Aorta (tissue), 5 donors: ENCODE measurements at regions of chr3 and their contacts with region 1.

Region 1: GRCh38 chr3:194129581-194130133 is 6.3 kb upstream of the HES1 start:
- DNase-seq: peak in 1 of 2 donors; percentile 79
- ATAC-seq: no peak
- H3K4me3 ChIP-seq: no peak overlapping the region
- H3K27ac ChIP-seq: no peak overlapping the region
- H3K4me1 ChIP-seq: peaks cover 0 to 5% of the 10 kb centered on the region in 2 donors
- H3K27me3 ChIP-seq: no peaks in the 10 kb centered on the region

Region 2: DNA sequence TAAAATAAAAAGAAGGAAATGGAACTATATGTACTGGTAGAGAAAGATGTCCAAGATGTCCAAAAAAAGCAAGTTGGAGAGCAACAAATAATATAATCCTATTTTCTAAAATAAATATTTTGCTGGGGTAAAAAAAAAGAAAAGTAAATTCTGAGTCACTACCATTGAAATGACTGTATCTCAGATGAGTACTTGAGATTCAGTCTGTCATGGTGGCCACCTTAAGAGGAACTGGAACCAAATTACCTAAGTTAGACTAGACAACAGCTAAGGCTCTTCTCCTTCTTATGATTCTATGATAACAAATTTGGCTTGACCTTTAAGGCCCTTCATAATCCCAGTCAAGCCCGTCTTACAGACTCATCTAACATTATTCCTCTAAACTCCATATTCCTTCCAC is 264.3 kb before region 1 on chr3:
- intact Hi-C with region 1: no loop called
- DNase-seq: no peak
- ATAC-seq: no peak
- H3K4me3 ChIP-seq: no peak overlapping the region
- H3K27ac ChIP-seq: no peak overlapping the region
- H3K4me1 ChIP-seq: peaks cover 0 to 2% of the 10 kb centered on the region in 2 donors
- H3K27me3 ChIP-seq: no peaks in the 10 kb centered on the region

Region 3: DNA sequence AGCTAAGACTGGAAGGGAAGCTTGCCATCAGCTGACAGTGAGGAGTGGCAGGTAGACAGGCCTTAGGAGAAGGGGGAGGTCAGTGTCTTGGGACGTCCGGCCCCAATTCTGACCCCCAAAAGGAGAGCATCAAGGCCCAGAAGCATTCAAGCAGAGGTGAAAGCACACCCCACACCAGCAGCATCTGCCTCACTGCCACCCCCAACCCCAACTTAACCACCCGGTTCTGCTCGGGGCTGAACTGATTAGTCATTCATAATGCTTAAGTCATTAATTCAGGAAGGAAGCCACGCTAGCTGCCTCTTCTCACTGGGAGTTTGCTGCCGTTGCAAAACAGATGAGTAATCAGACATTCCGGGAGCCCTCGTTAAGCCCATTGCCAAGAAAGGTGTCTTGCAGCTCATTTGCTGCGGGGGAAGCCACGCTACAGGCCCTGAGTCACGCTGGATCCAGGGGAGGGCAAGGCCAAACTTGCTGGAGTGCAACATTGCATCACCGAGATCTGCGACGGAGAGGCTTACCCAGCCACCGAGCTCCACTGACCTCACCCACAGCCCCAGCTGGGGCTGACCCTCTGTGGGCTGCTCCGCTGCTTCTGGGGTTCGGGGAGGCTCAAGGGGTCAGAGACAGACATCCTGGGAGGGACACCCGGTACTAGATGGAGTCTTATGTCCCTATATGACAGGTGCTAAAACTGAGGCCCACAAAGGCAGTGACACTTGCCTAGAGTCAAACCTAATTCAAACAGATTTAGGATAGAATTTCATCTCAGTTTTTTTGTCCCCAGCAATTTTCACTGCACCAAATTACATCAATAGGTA is 40.1 kb before region 1 on chr3:
- intact Hi-C with region 1: loop called in 1 of 2 experiments (anchors 5 kb)
- DNase-seq: peak; percentile 80 to 88
- ATAC-seq: peak; percentile 68
- H3K4me3 ChIP-seq: no peak overlapping the region
- H3K27ac ChIP-seq: no peak overlapping the region
- H3K4me1 ChIP-seq: no peaks in the 10 kb centered on the region
- H3K27me3 ChIP-seq: no peaks in the 10 kb centered on the region

Region 4: DNA sequence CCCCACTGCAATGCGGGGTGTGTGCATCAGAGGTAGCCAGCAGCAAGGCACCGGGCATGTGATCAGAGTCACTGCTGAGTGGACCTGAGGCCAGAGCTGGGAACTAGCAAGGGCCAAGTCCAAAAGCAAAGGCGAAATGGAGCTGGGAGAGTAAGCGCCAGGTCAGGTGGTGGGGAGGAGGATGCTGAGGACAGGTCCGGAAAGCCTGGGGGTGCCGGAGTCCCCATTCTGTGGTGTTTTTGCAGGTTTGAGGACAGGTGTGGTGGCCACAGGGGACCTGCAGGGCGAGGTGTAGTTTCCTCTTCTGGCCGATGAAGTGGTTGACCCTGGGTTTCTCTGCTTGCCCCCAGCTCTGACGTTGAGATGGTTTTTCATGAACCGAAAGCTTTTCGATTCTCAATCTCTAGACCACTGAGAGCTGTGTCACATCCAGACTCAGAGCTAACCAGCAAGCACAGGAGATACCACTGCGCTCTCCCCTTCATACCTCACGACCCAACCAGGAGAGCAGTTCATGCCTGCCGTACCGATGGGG is 28.7 kb before region 1 on chr3:
- intact Hi-C with region 1: no loop called
- DNase-seq: no peak
- ATAC-seq: no peak
- H3K4me3 ChIP-seq: no peak overlapping the region
- H3K27ac ChIP-seq: no peak overlapping the region
- H3K4me1 ChIP-seq: peaks cover 0 to 4% of the 10 kb centered on the region in 2 donors
- H3K27me3 ChIP-seq: no peaks in the 10 kb centered on the region